Gastrocnemius medialis (tissue), 4 donors: ENCODE measurements at regions of chr7 and their contacts with region 1.

Region 1: GRCh38 chr7:34530259-34530658 is 127.8 kb upstream of the NPSR1 start:
- DNase-seq: no peak
- ATAC-seq: no peak
- H3K4me3 ChIP-seq: no peak overlapping the region
- H3K27ac ChIP-seq: no peak overlapping the region
- H3K4me1 ChIP-seq: no peaks in the 10 kb centered on the region
- H3K27me3 ChIP-seq: no peaks in the 10 kb centered on the region
- CTCF ChIP-seq: no peak
- POLR2A ChIP-seq: no peak

Region 2: GRCh38 chr7:33886149-33886623 is 644.1 kb before region 1 on chr7:
- in situ Hi-C with region 1: no loop called
- intact Hi-C with region 1: no loop called
- DNase-seq: no peak
- ATAC-seq: no peak
- H3K4me3 ChIP-seq: no peak overlapping the region
- H3K27ac ChIP-seq: no peak overlapping the region
- H3K4me1 ChIP-seq: no peaks in the 10 kb centered on the region
- H3K27me3 ChIP-seq: no peaks in the 10 kb centered on the region
- CTCF ChIP-seq: no peak
- POLR2A ChIP-seq: no peak

Region 3: GRCh38 chr7:34430458-34430857 is 99.8 kb before region 1 on chr7:
- in situ Hi-C with region 1: loop called in 1 of 4 experiments (anchors 25 kb)
- intact Hi-C with region 1: no loop called
- DNase-seq: no peak
- ATAC-seq: no peak
- H3K4me3 ChIP-seq: no peak overlapping the region
- H3K27ac ChIP-seq: no peak overlapping the region
- H3K4me1 ChIP-seq: no peaks in the 10 kb centered on the region
- H3K27me3 ChIP-seq: no peaks in the 10 kb centered on the region
- CTCF ChIP-seq: peak in 1 of 5 experiments; percentile 10
- POLR2A ChIP-seq: no peak